ENCODE measurements at regions of chr1 and their contacts with region 1.

Region 1: DNA sequence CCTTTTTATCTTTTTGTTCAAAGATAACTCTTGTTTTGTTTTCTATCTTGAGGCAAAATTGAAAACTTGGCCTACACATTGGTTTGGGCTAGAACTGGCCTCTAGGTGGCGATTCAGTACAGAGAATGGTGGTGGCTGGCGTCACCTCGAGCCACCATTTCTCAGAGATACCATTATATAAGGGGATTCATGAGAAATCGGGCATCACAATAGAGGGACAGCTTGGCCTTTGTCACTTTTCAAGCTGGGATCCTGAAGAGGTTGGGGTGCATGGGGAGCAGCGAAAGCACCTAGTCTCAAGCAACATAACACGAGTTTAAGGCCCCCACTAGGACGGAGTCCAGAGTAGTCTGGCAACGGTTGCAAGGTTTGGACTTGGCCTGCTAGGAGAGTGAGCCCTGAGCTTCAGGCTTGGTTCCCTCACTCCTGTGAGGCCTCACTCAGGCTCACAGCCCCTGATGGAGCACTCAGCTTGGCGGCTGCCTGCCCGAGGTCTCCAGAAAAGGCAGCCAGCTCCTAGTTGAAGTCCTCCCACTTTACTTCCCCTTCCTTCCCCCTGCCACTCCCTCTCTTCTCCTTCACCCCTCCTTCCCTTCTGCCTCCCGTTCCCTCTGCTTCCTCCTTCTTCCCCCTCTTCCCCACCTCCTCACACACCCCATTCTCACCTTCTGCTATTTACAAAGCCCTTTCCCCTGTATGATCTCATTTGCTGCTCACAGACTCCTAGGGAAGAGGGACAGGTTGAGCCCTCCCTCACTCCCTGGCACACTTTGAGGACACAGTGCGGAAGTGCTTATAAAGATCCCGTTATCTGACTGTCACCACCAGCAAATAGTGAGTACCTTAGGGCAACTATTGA is 67.8 kb downstream of the LRIG2 start:
- DNase-seq: peak; percentile 81
- H3K4me3 Mint-ChIP-seq: no peak overlapping the region
- H3K27ac Mint-ChIP-seq: no peak overlapping the region
- H3K4me1 Mint-ChIP-seq: peaks cover 22% of the 10 kb centered on the region
- H3K27me3 Mint-ChIP-seq: no peaks in the 10 kb centered on the region

Region 2: GRCh38 chr1:113452921-113453770 is 312.3 kb after region 1 on chr1:
- CTCF ChIA-PET with region 1: interaction called, 12 read pairs
- intact Hi-C with region 1: loop called (anchors 1 kb)
- DNase-seq: peak; percentile 18
- H3K4me3 Mint-ChIP-seq: no peak overlapping the region
- H3K27ac Mint-ChIP-seq: no peak overlapping the region
- H3K4me1 Mint-ChIP-seq: no peaks in the 10 kb centered on the region
- H3K27me3 Mint-ChIP-seq: no peaks in the 10 kb centered on the region

Region 3: GRCh38 chr1:113677250-113678158 is 536.7 kb after region 1 on chr1:
- CTCF ChIA-PET with region 1: interaction called, 7 read pairs
- intact Hi-C with region 1: loop called (anchors 1 kb)
- DNase-seq: no peak
- H3K4me3 Mint-ChIP-seq: no peak overlapping the region
- H3K27ac Mint-ChIP-seq: no peak overlapping the region
- H3K4me1 Mint-ChIP-seq: no peaks in the 10 kb centered on the region
- H3K27me3 Mint-ChIP-seq: no peaks in the 10 kb centered on the region

Region 4: GRCh38 chr1:113811888-113812660 is 671.3 kb after region 1 on chr1 and contains the start of gene RSBN1:
- CTCF ChIA-PET with region 1: no interaction called
- intact Hi-C with region 1: loop called (anchors 2 kb)
- DNase-seq: peak; percentile 99
- H3K4me3 Mint-ChIP-seq: peak within 1 kb of the TSS; percentile 98
- H3K27ac Mint-ChIP-seq: peak within 1 kb of the TSS; percentile 94
- H3K4me1 Mint-ChIP-seq: peaks cover 31% of the 10 kb centered on the region
- H3K27me3 Mint-ChIP-seq: no peaks in the 10 kb centered on the region
- total RNA-seq, gene RSBN1: 13.6 to 14.3 TPM

Measured in activated naive CD4-positive, alpha-beta T cell treated with anti-CD3 and anti-CD28 coated beads for 36 hours (primary cell).